Natural killer cell (primary cell): ENCODE measurements at regions of chr5 and their contacts with region 1.

Region 1: GRCh38 chr5:138065102-138065501 is 18.7 kb upstream of the WNT8A start:
- DNase-seq: peak in 1 of 2 donors; percentile 29
- ATAC-seq: no peak
- H3K4me3 ChIP-seq: no peak overlapping the region
- H3K4me3 Mint-ChIP-seq: no peak overlapping the region
- H3K27ac ChIP-seq: no peak overlapping the region
- H3K27ac Mint-ChIP-seq: no peak overlapping the region
- H3K4me1 ChIP-seq: no peaks in the 10 kb centered on the region
- H3K4me1 Mint-ChIP-seq: peaks cover 5% of the 10 kb centered on the region in 2 donors
- H3K27me3 ChIP-seq: peaks cover 2% of the 10 kb centered on the region
- H3K27me3 Mint-ChIP-seq: no peaks in the 10 kb centered on the region
- CTCF ChIP-seq: no peak

Region 2: DNA sequence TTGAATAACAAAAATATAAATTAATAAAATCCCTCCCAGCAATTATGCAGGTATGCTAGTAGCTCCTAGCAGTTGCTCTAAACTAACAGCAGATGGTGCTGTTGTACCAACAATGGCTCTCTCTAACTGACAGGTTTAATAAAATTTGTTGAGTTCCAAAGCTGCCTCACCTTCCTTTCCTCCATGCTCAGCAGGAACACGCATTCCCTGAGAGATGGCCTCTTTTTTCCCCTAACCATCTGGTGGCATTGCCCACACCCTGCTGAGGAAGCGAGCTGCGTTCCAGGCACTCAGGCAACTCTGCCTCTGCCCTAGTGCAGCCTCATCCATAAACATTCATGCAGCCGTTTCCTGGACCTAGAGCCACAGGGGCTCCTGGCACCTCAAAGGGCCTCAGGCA is 435.5 kb before region 1 on chr5:
- intact Hi-C with region 1: loop called (anchors 2 kb)
- DNase-seq: peak in 1 of 2 donors; percentile 75
- ATAC-seq: peak; percentile 77 to 87 (median 79)
- H3K4me3 ChIP-seq: no peak overlapping the region
- H3K4me3 Mint-ChIP-seq: no peak overlapping the region
- H3K27ac ChIP-seq: no peak overlapping the region
- H3K27ac Mint-ChIP-seq: no peak overlapping the region
- H3K4me1 ChIP-seq: no peaks in the 10 kb centered on the region
- H3K4me1 Mint-ChIP-seq: no peaks in the 10 kb centered on the region
- H3K27me3 ChIP-seq: no peaks in the 10 kb centered on the region
- H3K27me3 Mint-ChIP-seq: no peaks in the 10 kb centered on the region
- CTCF ChIP-seq: peak; percentile 94

Region 3: DNA sequence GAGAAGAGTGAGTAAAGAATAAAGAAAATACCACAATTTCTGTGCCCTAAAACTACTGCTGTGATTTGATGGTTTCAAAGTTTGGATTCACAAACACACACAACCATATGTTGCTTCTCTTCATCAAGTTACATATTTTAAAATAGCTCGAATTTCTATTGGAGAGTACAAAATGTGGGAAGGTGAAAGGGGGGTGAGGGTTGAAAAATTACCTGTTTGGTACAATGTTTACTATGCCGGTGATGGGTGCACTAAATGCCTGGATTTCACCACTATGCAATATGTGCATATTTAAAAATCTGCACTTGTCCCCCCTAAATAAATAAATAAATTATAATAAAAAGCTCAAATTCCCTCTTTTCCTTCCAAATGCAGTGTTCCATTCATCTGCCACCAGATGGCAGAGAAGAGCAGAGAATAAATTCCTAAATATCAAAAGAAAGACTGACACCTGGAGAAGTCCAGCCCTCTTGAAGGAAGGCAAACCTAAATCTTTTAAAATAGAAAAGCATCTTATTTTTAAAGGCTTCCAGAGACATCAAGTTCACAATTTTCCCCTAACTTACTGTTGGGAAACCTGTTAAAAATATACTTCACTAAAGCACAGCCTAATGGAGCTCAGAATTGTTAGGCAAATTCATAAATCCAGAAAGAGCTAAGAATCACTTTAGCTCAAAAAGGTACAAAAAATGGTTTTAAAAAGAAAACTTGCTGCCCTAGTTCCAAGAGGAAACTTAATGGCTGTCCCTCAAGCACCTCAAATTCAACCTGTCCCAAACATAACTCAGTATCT is 286.1 kb before region 1 on chr5:
- intact Hi-C with region 1: loop called (anchors 10 kb)
- DNase-seq: peak in 1 of 2 donors; percentile 60
- ATAC-seq: no peak
- H3K4me3 ChIP-seq: no peak overlapping the region
- H3K4me3 Mint-ChIP-seq: no peak overlapping the region
- H3K27ac ChIP-seq: no peak overlapping the region
- H3K27ac Mint-ChIP-seq: no peak overlapping the region
- H3K4me1 ChIP-seq: no peaks in the 10 kb centered on the region
- H3K4me1 Mint-ChIP-seq: no peaks in the 10 kb centered on the region
- H3K27me3 ChIP-seq: no peaks in the 10 kb centered on the region
- H3K27me3 Mint-ChIP-seq: no peaks in the 10 kb centered on the region
- CTCF ChIP-seq: peak; percentile 76

Region 4: GRCh38 chr5:138035605-138036537 is 29.2 kb before region 1 on chr5:
- intact Hi-C with region 1: loop called (anchors 1 kb)
- DNase-seq: peak; percentile 33 to 89
- ATAC-seq: peak; percentile 60 to 77 (median 62)
- H3K4me3 ChIP-seq: no peak overlapping the region
- H3K4me3 Mint-ChIP-seq: peak overlapping the region; percentile 74
- H3K27ac ChIP-seq: no peak overlapping the region
- H3K27ac Mint-ChIP-seq: peak overlapping the region; percentile 50 to 58
- H3K4me1 ChIP-seq: peaks cover 18% of the 10 kb centered on the region
- H3K4me1 Mint-ChIP-seq: peaks cover 31 to 32% of the 10 kb centered on the region in 2 donors
- H3K27me3 ChIP-seq: no peaks in the 10 kb centered on the region
- H3K27me3 Mint-ChIP-seq: no peaks in the 10 kb centered on the region
- CTCF ChIP-seq: peak; percentile 92